HepG2 (cell line): ENCODE measurements at regions of chr22 and their contacts with region 1.

Region 1: DNA sequence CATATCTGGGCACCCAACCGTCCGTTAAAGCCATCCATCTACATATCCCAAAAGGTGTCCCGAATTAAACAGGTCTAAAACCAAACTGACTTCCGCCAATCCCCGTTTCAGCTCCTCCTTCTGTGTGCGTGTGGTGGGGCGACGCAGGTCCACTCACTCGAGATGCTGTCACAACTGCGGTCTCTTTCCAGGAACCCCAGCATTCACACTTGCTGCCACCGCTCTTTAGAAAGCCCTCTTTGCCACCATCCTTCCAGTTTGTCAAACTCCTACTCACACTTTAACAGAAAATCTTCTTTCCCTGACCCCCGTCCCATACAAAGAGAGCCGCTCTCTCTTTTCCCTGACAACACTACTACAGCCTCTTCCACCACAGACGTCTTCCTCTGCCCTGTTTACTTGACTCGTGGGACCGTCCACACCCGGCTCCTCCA is 467 bp downstream of the ESS2 start:
- DNase-seq: no peak
- ATAC-seq: no peak
- H3K4me3 ChIP-seq: peak overlapping the region; percentile 83 to 95 (median 90)
- H3K27ac ChIP-seq: peak overlapping the region; percentile 31
- H3K4me1 ChIP-seq: peaks cover 17% of the 10 kb centered on the region
- H3K27me3 ChIP-seq: peaks cover 4 to 31% of the 10 kb centered on the region in 2 experiments; a peak in 3 of 5 replicates
- CTCF ChIP-seq: no peak
- EP300 ChIP-seq: no peak
- POLR2A ChIP-seq: no peak
- RAD21 ChIP-seq: no peak

Region 2: DNA sequence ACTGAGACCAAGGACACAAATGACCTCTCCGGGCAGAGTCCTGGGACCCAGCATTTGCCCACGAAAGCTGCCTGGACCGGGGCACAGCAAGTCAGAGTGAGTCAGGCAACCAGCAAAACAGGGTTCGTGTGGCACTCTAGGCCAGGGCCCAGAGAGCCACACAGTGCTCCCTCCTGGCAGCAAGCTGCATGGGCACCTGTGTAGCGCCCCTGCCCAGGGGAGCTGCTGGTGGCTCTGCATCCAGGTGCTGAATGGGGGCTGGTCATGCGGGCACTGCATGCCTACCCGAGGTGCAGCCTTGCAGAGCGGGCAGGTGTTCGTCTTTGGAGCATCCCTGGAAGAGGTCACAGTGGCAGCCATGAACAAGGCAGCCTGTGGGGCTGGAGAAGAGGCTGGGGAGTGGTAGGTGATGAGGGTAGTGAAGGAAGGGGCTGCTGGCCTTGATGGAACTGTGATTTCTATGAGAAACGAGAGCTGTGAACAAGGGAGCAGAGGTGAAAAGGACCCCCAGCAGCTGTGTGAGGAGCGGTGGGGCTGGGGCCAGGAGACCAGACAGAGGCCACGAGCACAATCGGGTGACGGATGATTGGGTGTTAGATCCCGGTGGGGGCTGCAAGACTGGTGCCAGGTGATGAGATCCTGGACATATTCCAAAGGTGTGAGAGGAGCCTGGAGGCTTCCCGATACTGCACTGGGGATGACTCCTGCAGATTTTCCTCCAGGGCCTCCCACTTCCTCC is 85.1 kb before region 1 on chr22:
- CTCF ChIA-PET with region 1: no interaction called
- POLR2A ChIA-PET with region 1: no interaction called
- in situ Hi-C with region 1: no loop called
- intact Hi-C with region 1: no loop called
- DNase-seq: no peak
- ATAC-seq: peak; percentile 48
- H3K4me3 ChIP-seq: no peak overlapping the region
- H3K27ac ChIP-seq: no peak overlapping the region
- H3K4me1 ChIP-seq: peaks cover 11% of the 10 kb centered on the region; the same call in 1 of the 2 replicates
- H3K27me3 ChIP-seq: no peaks in the 10 kb centered on the region
- CTCF ChIP-seq: no peak
- EP300 ChIP-seq: no peak
- POLR2A ChIP-seq: no peak
- RAD21 ChIP-seq: no peak

Region 3: DNA sequence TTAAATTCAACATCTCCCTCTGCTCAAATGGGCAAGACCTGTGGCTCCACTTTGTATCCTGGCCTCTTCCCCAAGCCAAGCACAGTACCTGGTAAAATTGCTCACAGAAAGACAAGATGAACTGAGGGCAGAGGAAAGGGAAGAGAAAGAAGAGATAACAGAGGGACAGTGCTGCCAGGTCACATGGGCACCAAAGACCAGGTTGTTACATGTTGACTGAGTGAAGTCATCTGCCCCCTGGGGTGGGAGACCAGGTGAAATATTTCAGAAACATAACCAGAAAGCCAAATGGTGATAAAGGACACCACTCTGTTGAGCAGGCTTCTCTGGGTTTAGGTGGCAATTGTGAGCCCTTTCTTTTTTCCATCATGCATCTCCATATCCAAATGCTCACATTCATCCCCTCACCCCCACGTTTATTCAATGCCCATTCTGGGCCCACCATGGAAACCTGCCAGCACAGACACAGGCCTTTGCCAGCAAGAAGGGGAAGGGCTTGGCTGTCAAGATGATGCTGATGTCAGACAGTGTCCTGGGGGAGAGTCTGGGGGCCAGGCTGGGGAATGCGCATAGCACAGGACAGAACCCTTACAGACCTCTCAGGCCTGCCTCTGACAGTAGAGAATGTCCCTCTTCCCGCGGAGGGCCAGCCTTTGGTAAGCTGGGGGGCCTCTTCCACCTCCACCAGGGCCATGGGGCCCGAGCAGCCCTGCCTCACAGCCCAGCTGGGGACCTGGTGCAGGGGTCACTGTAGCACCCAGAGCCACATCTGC is 73.4 kb before region 1 on chr22:
- CTCF ChIA-PET with region 1: no interaction called
- POLR2A ChIA-PET with region 1: no interaction called
- in situ Hi-C with region 1: no loop called
- intact Hi-C with region 1: no loop called
- DNase-seq: no peak
- ATAC-seq: no peak
- H3K4me3 ChIP-seq: no peak overlapping the region
- H3K27ac ChIP-seq: no peak overlapping the region
- H3K4me1 ChIP-seq: no peaks in the 10 kb centered on the region
- H3K27me3 ChIP-seq: no peaks in the 10 kb centered on the region; a peak in 1 of 5 replicates
- CTCF ChIP-seq: no peak
- EP300 ChIP-seq: no peak
- POLR2A ChIP-seq: no peak
- RAD21 ChIP-seq: no peak

Region 4: DNA sequence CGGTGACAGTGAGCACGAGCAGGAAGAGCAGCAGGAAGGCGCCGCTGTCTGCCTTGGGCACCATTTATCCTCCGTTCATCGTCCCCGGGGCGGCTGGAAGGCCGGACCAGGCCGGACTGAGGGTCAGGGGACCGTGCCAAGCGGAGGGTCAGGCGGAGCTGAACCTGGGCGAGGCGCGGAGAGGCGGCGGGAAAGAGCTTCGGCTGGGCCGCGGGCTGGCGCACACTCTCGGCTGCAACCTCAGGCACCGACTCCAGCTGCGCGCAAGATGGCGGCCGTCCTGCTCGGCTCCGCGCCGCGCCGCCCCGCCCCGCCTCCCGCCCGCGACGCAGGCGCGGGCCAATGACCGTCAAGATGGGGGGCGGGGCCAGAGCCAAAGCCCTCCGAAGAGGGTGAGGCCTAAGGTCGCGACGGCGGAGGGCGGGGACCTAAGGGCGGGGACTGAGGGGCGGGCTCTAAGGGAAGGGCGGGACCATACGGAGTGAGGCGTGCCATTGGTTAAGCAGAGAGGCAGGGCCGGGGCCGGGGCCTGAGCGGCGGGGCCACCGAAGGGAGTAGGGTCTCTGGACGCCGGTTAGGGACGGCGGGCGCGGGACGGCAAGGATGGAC is 21.7 kb before region 1 on chr22 and contains the start of gene DGCR2:
- CTCF ChIA-PET with region 1: no interaction called
- POLR2A ChIA-PET with region 1: interaction called, 13 read pairs
- in situ Hi-C with region 1: no loop called
- intact Hi-C with region 1: no loop called
- DNase-seq: peak; percentile 91
- ATAC-seq: peak; percentile 92
- H3K4me3 ChIP-seq: peak within 1 kb of the TSS; percentile 90 to 97 (median 97)
- H3K27ac ChIP-seq: peak within 1 kb of the TSS; percentile 87
- H3K4me1 ChIP-seq: peaks cover 70% of the 10 kb centered on the region
- H3K27me3 ChIP-seq: peaks cover 2 to 30% of the 10 kb centered on the region in 2 experiments; a peak in 4 of 5 replicates
- CTCF ChIP-seq: no peak
- EP300 ChIP-seq: no peak
- POLR2A ChIP-seq: peak; percentile 63 to 94
- RAD21 ChIP-seq: no peak
- total RNA-seq, gene DGCR2: 13.1 and 35.3 TPM in 2 replicates

Region 5: DNA sequence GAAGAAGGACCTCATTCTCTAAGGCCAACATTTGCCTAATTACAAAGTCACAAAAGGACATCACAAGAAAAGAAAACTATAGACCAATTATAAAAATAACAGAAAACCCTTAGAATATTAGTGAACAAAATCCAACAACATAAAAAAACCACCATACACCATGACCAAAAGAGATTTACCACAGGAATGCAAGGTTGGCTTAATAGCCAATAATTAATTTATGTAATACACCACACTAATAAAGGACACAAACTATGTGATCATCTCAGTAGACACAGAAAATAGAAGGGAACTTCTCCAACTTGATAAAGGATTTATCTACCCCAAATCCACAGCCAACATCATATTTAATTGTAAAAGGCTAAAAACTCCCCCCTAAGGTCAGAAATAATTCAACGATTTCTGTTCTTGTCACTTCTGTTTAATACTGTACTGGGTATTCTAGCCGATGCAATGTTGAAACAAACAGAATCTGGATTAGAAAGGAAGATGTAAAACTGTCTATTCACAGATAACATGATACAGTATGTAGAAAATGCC is 122.6 kb after region 1 on chr22:
- CTCF ChIA-PET with region 1: no interaction called
- POLR2A ChIA-PET with region 1: no interaction called
- in situ Hi-C with region 1: no loop called
- intact Hi-C with region 1: no loop called
- DNase-seq: no peak
- ATAC-seq: no peak
- H3K4me3 ChIP-seq: no peak overlapping the region
- H3K27ac ChIP-seq: no peak overlapping the region
- H3K4me1 ChIP-seq: peaks cover 6% of the 10 kb centered on the region
- H3K27me3 ChIP-seq: no peaks in the 10 kb centered on the region
- CTCF ChIP-seq: no peak
- EP300 ChIP-seq: no peak
- POLR2A ChIP-seq: no peak
- RAD21 ChIP-seq: no peak